AG04450 (cell line): ENCODE measurements at regions of chr6 and their contacts with region 1.

Region 1: GRCh38 chr6:118387764-118388701 is 160.1 kb upstream of the PLN start:
- DNase-seq: peak; percentile 81
- H3K4me3 ChIP-seq: no peak overlapping the region
- H3K27ac ChIP-seq: peak overlapping the region; percentile 79
- H3K27me3 ChIP-seq: no peaks in the 10 kb centered on the region
- CTCF ChIP-seq: 0 out of 2 replicates have a peak, but pooled peaks have one; percentile 10

Region 2: DNA sequence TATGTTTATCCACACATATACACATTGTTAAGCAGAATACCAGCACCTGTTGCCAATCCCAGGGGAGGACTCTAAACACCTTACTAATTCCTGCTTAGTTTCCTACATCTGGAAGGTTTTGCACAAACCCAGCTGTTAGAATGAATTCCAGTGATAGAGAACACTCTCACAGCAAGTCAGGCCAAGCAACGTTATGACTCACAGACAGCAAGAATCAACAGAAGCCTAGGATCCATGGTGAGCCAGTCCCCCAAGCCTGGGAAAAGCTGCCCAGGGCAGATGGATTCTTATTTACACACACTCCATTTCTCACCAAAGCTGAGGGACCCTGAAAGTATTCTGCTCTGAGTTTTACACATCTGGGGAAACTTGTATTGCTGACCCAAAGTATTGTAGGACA is 189.3 kb before region 1 on chr6:
- CTCF ChIA-PET with region 1: no interaction called
- POLR2A ChIA-PET with region 1: no interaction called
- DNase-seq: no peak
- H3K4me3 ChIP-seq: no peak overlapping the region
- H3K27ac ChIP-seq: no peak overlapping the region
- H3K27me3 ChIP-seq: no peaks in the 10 kb centered on the region
- CTCF ChIP-seq: no peak

Region 3: DNA sequence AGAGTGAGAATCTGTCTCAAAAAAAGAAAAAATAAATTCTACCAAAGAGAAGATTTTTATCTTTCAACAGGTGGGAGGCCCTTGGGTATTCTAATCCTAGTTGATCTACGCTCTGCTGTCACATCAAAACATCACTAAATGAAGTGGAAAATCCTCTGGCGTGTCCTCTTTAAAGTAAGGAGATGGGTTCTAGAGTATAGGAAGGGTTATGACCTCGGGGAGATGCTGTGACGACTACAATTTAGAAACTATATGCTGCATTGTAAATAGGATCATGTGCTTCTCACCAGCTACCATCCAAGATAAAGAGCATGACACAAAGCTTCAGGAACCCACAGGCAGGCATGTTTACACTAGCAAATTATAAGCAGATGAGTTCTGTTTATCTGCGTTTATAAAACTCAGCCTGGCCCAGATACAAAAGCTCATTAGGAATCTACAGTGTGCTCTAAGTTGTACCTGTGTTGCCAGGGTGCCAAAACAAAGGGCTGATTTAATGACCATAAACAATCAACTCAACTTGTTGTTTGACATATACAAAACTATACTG is 37.1 kb before region 1 on chr6:
- CTCF ChIA-PET with region 1: no interaction called
- POLR2A ChIA-PET with region 1: interaction called, 12 read pairs
- DNase-seq: peak; percentile 82
- H3K4me3 ChIP-seq: no peak overlapping the region
- H3K27ac ChIP-seq: peak overlapping the region; percentile 49
- H3K27me3 ChIP-seq: no peaks in the 10 kb centered on the region
- CTCF ChIP-seq: no peak

Region 4: GRCh38 chr6:118367314-118367713 is 20.7 kb before region 1 on chr6:
- CTCF ChIA-PET with region 1: no interaction called
- POLR2A ChIA-PET with region 1: no interaction called
- DNase-seq: no peak
- H3K4me3 ChIP-seq: no peak overlapping the region
- H3K27ac ChIP-seq: no peak overlapping the region
- H3K27me3 ChIP-seq: no peaks in the 10 kb centered on the region
- CTCF ChIP-seq: no peak

Region 5: DNA sequence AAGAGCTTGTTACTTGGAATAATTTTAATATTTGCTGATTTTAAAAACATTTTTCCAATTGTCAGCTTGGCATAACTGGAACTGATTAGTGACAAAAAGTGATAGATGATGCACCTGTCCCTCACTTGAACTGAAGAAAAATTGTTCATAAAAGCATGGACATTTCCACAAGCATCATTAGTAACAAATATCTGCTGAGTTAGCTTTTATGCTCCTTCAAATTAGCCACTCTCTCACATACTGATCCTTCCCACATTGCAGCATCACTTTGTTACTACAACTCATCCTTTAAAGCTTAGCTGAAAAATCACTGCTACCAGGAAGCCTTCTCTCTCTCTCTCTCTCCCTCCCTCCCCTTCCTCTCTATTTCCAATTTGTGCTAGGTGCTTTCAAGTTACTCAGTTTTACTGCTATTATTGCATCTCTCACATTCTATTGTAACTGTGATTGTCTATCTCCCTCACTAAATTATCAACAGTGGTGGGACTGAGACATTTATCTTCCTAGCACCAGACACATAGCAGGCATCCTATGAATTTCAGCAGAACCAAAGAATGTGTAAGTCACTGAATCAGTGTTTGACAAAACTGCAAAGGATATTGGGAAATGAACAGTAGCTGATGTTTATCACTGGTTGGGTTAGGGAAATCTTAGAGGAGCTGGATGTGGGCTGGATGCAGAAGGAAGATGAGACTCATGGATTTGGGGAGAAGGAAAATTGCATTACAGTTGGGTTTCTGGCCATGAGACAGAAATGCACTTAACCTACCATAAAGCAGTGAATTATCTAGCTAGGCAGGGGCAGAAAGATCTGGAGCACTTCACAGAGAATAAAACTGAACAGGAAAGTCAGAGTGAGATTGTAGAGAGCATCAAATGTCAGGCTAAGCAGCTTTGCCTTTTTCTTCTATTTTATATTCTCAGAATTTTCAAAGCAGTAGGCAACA is 31.7 kb after region 1 on chr6:
- CTCF ChIA-PET with region 1: no interaction called
- POLR2A ChIA-PET with region 1: no interaction called
- DNase-seq: no peak
- H3K4me3 ChIP-seq: no peak overlapping the region
- H3K27ac ChIP-seq: no peak overlapping the region
- H3K27me3 ChIP-seq: no peaks in the 10 kb centered on the region
- CTCF ChIP-seq: no peak

Region 6: GRCh38 chr6:119162134-119162775 is 774.2 kb after region 1 on chr6:
- CTCF ChIA-PET with region 1: no interaction called
- POLR2A ChIA-PET with region 1: no interaction called
- DNase-seq: no peak
- H3K4me3 ChIP-seq: no peak overlapping the region
- H3K27ac ChIP-seq: no peak overlapping the region
- H3K27me3 ChIP-seq: peaks cover 4% of the 10 kb centered on the region
- CTCF ChIP-seq: no peak